ENCODE measurements at regions of chr5 and their contacts with region 1.

Region 1: DNA sequence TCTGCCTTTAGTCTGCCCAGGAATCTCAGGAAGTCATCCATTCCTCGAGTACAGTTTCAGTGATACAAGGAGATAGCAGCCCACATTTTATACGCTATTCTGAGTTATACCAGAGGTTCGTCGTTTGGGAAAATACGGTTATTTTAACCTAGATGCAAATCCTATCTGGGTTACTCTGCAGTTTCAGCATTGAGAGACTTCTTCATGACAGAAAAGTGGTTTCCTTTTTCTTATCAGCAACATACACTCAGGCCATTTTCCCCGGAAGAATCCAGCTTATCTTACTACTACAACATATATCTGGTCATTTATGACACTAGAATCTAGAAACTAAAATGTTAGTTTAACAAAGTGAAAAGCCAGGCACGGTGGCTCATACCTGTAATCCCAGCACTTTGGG is 83.4 kb upstream of the IQGAP2 start:
- DNase-seq: no peak
- ATAC-seq: no peak
- H3K4me3 ChIP-seq: no peak overlapping the region
- H3K4me3 Mint-ChIP-seq: no peak overlapping the region
- H3K27ac ChIP-seq: no peak overlapping the region
- H3K27ac Mint-ChIP-seq: no peak overlapping the region
- H3K4me1 ChIP-seq: no peaks in the 10 kb centered on the region
- H3K4me1 Mint-ChIP-seq: peaks cover 8% of the 10 kb centered on the region
- H3K27me3 ChIP-seq: no peaks in the 10 kb centered on the region
- H3K27me3 Mint-ChIP-seq: no peaks in the 10 kb centered on the region
- CTCF ChIP-seq: no peak

Region 2: DNA sequence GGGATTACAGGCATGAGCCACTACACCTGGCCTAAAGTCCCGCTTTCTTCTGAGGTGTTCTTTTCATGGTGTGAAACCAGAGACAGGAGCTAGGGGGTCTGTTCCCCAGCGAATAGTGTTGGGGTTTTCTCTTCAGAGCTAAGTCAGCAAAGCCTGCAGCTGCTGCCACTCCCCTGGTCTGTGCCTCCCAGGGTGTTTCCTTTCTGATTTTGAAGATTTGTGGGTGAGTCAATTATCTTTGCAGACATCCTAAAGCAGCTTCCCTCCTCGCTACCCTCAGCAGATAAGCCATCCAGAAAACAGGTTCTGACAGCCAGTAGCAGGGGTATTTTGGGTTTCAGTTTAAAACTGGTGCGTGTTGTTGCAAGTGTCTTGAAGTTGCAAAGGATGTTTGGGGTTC is 11.5 kb after region 1 on chr5:
- CTCF ChIA-PET with region 1: interaction called, 11 read pairs
- POLR2A ChIA-PET with region 1: interaction called, 6 read pairs
- intact Hi-C with region 1: no loop called
- DNase-seq: peak in 8 of 9 experiments; percentile 22 to 66 (median 34)
- ATAC-seq: peak; percentile 79
- H3K4me3 ChIP-seq: no peak overlapping the region
- H3K4me3 Mint-ChIP-seq: peak overlapping the region; percentile 65
- H3K27ac ChIP-seq: peak overlapping the region in 1 of 2 experiments; percentile 51
- H3K27ac Mint-ChIP-seq: peak overlapping the region; percentile 84
- H3K4me1 ChIP-seq: peaks cover 37% of the 10 kb centered on the region
- H3K4me1 Mint-ChIP-seq: peaks cover 63% of the 10 kb centered on the region
- H3K27me3 ChIP-seq: no peaks in the 10 kb centered on the region
- H3K27me3 Mint-ChIP-seq: no peaks in the 10 kb centered on the region
- CTCF ChIP-seq: peak; percentile 11

Region 3: DNA sequence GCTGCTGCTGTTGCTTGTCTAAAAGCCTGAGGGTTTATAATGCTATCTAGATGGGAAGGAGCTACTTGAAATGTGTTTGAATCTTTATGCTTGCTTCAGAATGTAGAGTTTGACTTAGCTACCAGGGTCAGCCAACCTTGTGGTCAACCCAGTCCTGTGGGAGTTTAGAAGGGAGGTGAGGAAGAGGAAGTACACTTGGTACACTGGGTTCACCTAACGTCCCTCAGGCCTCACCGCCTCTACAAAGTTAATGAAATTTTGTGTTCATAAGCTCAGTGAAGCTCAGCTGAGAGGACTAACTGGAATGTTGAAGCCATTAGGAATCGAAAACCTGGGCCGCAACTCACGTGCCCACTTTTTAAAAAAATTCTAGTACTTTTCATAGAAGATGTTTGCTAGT is 94.1 kb after region 1 on chr5:
- CTCF ChIA-PET with region 1: no interaction called
- POLR2A ChIA-PET with region 1: no interaction called
- intact Hi-C with region 1: no loop called
- DNase-seq: no peak
- ATAC-seq: no peak
- H3K4me3 ChIP-seq: no peak overlapping the region
- H3K4me3 Mint-ChIP-seq: no peak overlapping the region
- H3K27ac ChIP-seq: no peak overlapping the region
- H3K27ac Mint-ChIP-seq: peak overlapping the region; percentile 49
- H3K4me1 ChIP-seq: no peaks in the 10 kb centered on the region
- H3K4me1 Mint-ChIP-seq: peaks cover 71% of the 10 kb centered on the region
- H3K27me3 ChIP-seq: no peaks in the 10 kb centered on the region
- H3K27me3 Mint-ChIP-seq: no peaks in the 10 kb centered on the region
- CTCF ChIP-seq: no peak

Region 4: DNA sequence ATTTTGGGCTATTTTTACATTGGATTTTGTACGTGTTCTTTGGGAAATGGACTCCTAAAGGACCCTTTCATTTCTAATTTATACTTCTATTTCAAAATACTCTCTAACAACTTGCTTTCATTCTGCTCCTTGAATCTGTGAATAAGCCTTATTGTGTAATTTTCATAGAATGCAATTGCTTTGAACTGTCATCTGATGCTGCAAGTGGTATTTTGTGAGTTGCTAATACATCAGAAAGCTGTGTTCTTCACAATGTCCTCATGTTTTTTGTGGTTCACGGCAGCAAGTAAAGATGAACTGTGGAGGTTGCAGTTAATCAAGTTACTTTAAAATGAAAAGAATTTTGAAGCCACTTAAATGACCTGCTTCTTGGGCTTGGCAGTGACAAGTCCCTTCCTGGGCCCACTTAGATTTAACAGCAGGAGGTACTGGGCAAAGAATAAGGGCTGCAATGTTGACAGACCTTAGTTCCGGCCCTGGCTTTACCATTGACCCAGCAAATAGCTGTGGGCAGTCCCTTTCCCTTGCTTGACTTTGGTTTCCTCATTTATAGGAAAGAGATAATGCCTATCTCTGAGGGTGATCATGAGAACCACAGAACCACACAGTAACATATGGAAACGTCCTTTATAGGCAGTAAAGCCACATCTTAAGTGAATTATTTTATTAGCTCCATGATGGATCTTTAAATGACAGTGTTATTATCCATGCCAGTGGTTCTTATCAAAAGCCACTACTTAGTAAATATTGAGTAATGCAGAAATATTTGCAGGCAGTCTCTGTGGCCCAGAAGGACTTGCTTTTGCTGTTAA is 138.2 kb after region 1 on chr5:
- CTCF ChIA-PET with region 1: no interaction called
- POLR2A ChIA-PET with region 1: no interaction called
- intact Hi-C with region 1: no loop called
- DNase-seq: no peak
- ATAC-seq: no peak
- H3K4me3 ChIP-seq: no peak overlapping the region
- H3K4me3 Mint-ChIP-seq: no peak overlapping the region
- H3K27ac ChIP-seq: no peak overlapping the region
- H3K27ac Mint-ChIP-seq: no peak overlapping the region
- H3K4me1 ChIP-seq: peaks cover 4% of the 10 kb centered on the region
- H3K4me1 Mint-ChIP-seq: peaks cover 51% of the 10 kb centered on the region
- H3K27me3 ChIP-seq: no peaks in the 10 kb centered on the region
- H3K27me3 Mint-ChIP-seq: no peaks in the 10 kb centered on the region
- CTCF ChIP-seq: no peak